Activated CD8-positive, alpha-beta T cell treated with anti-CD3 and anti-CD28 coated beads for 36 hours (primary cell): ENCODE measurements at regions of chr1 and their contacts with region 1.

Region 1: DNA sequence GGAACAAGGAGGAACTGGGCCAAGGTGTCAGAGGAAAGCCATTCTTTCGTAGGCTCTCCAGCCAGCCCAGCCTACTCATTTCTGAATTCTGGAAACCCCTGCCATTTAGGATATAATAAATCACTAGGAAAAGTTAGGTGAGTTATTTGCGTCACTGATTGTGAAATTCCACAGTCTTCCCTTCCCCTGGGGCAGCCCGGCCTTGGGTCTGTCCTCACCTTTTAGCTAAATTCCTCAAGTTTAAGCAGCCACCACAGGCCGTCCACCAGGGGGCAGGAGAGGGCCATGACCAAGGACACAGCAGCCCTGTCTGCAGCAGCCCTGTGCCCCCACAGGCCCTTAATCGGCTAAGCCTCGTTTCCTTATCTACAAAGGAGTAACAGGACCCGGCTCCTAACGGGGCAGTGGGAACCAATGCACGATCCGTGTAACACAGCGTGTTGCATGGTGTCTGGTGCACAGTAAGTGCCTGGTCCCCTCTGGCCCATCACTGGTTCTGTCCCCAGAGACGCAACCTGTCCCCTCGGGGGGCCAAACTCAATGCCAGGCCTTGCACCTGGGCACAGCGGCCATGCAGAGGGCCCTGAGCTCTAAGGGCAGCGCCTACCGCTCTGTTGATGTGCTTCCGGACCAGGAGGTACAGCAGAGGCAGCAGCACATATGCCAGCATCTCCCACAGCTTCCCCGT is 18.1 kb downstream of the GPR157 start:
- DNase-seq: peak; percentile 93
- ATAC-seq: peak; percentile 83
- H3K4me3 Mint-ChIP-seq: no peak overlapping the region
- H3K27ac Mint-ChIP-seq: no peak overlapping the region
- H3K4me1 Mint-ChIP-seq: peaks cover 2% of the 10 kb centered on the region
- H3K27me3 Mint-ChIP-seq: no peaks in the 10 kb centered on the region
- CTCF ChIP-seq: peak; percentile 88

Region 2: GRCh38 chr1:8789314-8790214 is 321.2 kb before region 1 on chr1:
- CTCF ChIA-PET with region 1: no interaction called
- POLR2A ChIA-PET with region 1: no interaction called
- intact Hi-C with region 1: no loop called
- DNase-seq: no peak
- ATAC-seq: no peak
- H3K4me3 Mint-ChIP-seq: no peak overlapping the region
- H3K27ac Mint-ChIP-seq: no peak overlapping the region
- H3K4me1 Mint-ChIP-seq: peaks cover 3% of the 10 kb centered on the region
- H3K27me3 Mint-ChIP-seq: no peaks in the 10 kb centered on the region
- CTCF ChIP-seq: no peak

Region 3: GRCh38 chr1:9061252-9061960 is 49.4 kb before region 1 on chr1:
- CTCF ChIA-PET with region 1: no interaction called
- POLR2A ChIA-PET with region 1: no interaction called
- intact Hi-C with region 1: no loop called
- DNase-seq: no peak
- ATAC-seq: no peak
- H3K4me3 Mint-ChIP-seq: no peak overlapping the region
- H3K27ac Mint-ChIP-seq: no peak overlapping the region
- H3K4me1 Mint-ChIP-seq: no peaks in the 10 kb centered on the region
- H3K27me3 Mint-ChIP-seq: no peaks in the 10 kb centered on the region
- CTCF ChIP-seq: no peak

Region 4: GRCh38 chr1:9139930-9140329 is 29.1 kb after region 1 on chr1:
- CTCF ChIA-PET with region 1: interaction called, 11 read pairs
- POLR2A ChIA-PET with region 1: no interaction called
- intact Hi-C with region 1: no loop called
- DNase-seq: no peak
- ATAC-seq: no peak
- H3K4me3 Mint-ChIP-seq: no peak overlapping the region
- H3K27ac Mint-ChIP-seq: no peak overlapping the region
- H3K4me1 Mint-ChIP-seq: no peaks in the 10 kb centered on the region
- H3K27me3 Mint-ChIP-seq: no peaks in the 10 kb centered on the region
- CTCF ChIP-seq: no peak

Region 5: GRCh38 chr1:9145021-9145668 is 34.3 kb after region 1 on chr1:
- CTCF ChIA-PET with region 1: interaction called, 11 read pairs
- POLR2A ChIA-PET with region 1: no interaction called
- intact Hi-C with region 1: no loop called
- DNase-seq: peak; percentile 26
- ATAC-seq: no peak
- H3K4me3 Mint-ChIP-seq: no peak overlapping the region
- H3K27ac Mint-ChIP-seq: no peak overlapping the region
- H3K4me1 Mint-ChIP-seq: no peaks in the 10 kb centered on the region
- H3K27me3 Mint-ChIP-seq: no peaks in the 10 kb centered on the region
- CTCF ChIP-seq: no peak

Region 6: DNA sequence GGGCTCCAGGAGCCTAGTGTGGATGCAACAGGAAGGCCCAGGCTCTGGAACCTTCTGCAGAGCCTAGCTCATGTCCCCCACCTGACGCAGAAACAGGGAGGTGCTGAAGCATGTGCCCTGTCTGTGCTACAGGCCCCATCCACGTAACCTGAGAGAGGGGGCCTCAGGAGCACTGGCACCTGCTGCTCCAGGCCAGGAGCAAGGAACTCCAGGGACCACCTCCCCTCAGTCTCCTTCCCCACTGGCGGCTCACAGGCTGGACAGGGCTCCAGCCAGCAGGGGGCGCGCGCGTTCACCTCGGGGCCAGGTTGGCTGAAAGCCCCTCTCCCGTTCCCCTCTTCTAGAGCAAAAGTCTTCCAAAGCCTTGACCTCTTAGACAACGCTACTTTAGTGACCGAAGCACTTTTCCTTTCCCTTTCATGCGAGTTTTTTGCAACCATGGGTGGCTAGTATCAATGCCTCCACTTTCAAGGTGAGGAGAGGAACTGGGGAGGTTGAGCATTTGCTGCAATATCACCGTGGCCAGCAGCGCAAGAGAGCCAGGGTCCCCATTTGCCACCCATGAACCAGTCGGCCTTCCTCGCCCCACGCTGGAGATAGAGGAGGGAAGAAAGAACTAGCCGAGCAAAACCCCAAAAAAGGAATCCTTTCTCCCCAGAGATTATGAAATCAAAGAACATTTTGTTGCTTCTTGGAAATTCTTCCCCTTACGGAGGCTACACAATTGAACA is 70.5 kb after region 1 on chr1:
- CTCF ChIA-PET with region 1: interaction called, 12 read pairs
- POLR2A ChIA-PET with region 1: no interaction called
- intact Hi-C with region 1: no loop called
- DNase-seq: peak; percentile 74
- ATAC-seq: peak; percentile 67
- H3K4me3 Mint-ChIP-seq: peak overlapping the region; percentile 70
- H3K27ac Mint-ChIP-seq: peak overlapping the region; percentile 66
- H3K4me1 Mint-ChIP-seq: peaks cover 6% of the 10 kb centered on the region
- H3K27me3 Mint-ChIP-seq: peaks cover 32% of the 10 kb centered on the region
- CTCF ChIP-seq: peak; percentile 94

Region 7: DNA sequence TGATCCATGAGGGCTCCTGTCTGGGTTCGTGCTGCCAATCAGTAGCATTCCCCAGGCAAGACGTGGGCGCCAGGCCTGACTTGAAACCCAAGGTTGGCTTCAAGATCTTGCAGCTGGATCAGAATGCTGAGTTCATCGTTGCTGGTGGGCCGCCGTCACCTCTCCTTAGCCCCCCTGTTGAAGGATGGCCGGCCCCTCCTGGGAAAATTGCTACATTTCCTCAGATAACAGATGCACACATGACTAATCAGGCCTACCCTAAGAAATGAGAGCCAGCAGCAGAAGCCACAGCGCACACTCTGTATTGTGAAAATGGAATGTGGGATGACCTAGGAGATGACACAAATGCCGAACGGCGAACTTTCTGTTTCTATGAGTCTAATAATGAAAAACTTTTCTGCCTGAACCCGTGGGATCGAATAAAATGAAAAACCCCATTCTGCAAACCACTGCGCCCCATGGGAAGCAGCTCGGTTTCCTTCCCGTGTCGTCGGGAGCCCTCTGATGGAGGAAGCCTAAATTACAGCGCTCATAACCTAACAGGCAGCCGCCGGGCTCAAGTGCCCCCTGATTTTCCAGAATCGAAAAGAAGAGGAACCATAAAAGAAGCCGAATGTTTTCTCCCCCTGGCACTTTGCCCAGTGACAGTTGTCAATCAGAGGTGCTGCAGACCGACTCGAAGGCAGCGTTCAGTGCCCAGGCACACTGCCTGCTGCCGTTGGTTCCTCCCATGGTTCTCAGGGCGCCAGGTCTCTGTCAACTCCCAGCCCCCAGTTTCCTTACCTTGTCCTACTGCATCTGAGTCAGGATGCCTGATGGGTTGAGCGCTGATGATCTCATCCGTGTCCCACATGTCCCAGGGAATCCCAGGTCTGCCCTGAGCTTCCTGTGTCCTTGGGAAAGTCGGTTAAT is 85.6 kb after region 1 on chr1:
- CTCF ChIA-PET with region 1: interaction called, 63 read pairs
- POLR2A ChIA-PET with region 1: no interaction called
- intact Hi-C with region 1: loop called (anchors 2 kb)
- DNase-seq: peak; percentile 79
- ATAC-seq: peak; percentile 63
- H3K4me3 Mint-ChIP-seq: no peak overlapping the region
- H3K27ac Mint-ChIP-seq: no peak overlapping the region
- H3K4me1 Mint-ChIP-seq: peaks cover 24% of the 10 kb centered on the region
- H3K27me3 Mint-ChIP-seq: peaks cover 52% of the 10 kb centered on the region
- CTCF ChIP-seq: peak; percentile 86